Mammary epithelial cell (primary cell): ENCODE measurements at regions of chr3 and their contacts with region 1.

Region 1: DNA sequence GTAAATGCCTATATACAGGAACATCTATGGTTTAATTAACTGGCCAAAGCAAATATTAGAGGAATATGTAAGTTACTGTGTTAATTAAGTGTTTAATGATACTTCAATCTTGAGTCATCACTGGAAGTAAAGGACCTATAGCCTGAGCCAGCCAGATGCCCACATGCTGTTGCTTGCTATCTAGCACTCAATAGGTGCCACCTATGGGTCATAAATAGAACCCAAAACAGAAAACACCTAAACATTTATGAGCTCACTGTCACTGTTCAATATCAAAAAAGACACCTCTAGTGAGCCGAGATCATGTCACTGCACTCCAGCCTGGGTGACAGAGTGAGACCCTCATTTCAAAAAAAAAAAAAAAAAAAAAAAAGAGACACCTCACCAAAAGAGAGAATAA is 48.4 kb upstream of the IP6K2 start:
- DNase-seq: peak; percentile 29
- H3K4me3 ChIP-seq: no peak overlapping the region
- H3K27ac ChIP-seq: no peak overlapping the region
- H3K4me1 ChIP-seq: no peaks in the 10 kb centered on the region
- H3K27me3 ChIP-seq: no peaks in the 10 kb centered on the region
- CTCF ChIP-seq: peak; percentile 28 to 63

Region 2: DNA sequence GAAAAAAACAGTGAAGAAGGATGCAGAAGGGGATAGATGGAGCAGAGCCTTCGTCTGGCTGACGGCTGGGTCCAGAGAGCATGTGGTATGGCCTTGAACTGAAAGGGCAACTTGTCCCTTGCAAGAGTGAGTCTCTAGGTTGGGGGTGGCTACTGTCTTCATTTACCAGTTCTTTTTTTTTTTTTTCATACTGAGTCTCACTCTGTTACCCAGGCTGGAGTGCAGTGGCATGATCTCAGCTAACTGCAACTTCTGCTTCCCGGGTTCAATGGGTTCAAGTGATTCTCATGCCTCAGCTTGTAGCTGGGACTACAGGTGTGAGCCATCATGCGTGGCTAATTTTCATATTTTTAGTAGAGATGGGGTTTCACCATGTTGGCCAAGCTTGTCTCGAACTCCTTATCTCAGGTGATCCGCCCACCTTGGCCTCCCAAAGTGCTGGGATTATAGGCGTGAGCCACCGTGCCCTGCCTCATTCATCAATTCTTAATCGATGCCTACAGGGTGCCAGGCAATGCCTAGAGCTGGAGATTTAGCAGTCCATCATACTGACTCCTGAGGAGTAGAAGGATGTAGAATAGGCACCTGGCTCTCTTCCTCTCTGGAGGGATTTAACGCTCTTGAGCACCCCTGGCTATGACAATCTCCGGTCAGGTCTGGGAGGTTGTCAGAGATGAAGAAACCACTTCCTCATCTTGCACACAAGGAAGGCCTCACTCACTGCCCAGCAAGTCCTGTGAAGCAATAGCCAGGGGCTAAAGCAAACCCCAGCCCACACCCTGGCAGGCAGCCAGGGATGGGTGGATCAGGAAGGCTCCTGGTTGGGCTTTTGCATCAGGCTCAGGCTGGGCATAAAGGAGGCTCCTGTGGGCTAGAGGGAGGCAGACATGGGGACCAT is 542.5 kb before region 1 on chr3 and contains the start of gene CAMP:
- CTCF ChIA-PET with region 1: no interaction called
- dilution Hi-C with region 1: no loop called
- in situ Hi-C with region 1: no loop called
- intact Hi-C with region 1: no loop called
- DNase-seq: peak; percentile 94
- H3K4me3 ChIP-seq: no peak within 1 kb of the TSS
- H3K27ac ChIP-seq: peak within 1 kb of the TSS; percentile 49
- H3K4me1 ChIP-seq: peaks cover 22% of the 10 kb centered on the region
- H3K27me3 ChIP-seq: no peaks in the 10 kb centered on the region
- CTCF ChIP-seq: no peak
- total RNA-seq, gene CAMP: 5.3 to 7.0 TPM

Region 3: GRCh38 chr3:48674505-48674904 is 90.9 kb before region 1 on chr3:
- CTCF ChIA-PET with region 1: no interaction called
- dilution Hi-C with region 1: loop called (anchors 5 kb)
- in situ Hi-C with region 1: no loop called
- intact Hi-C with region 1: no loop called
- DNase-seq: no peak
- H3K4me3 ChIP-seq: no peak overlapping the region
- H3K27ac ChIP-seq: no peak overlapping the region
- H3K4me1 ChIP-seq: no peaks in the 10 kb centered on the region
- H3K27me3 ChIP-seq: no peaks in the 10 kb centered on the region
- CTCF ChIP-seq: no peak

Region 4: GRCh38 chr3:48685602-48686511 is 79.5 kb before region 1 on chr3 and contains the start of gene NCKIPSD:
- CTCF ChIA-PET with region 1: no interaction called
- dilution Hi-C with region 1: no loop called
- in situ Hi-C with region 1: no loop called
- intact Hi-C with region 1: loop called (anchors 1 kb)
- DNase-seq: peak; percentile 79
- H3K4me3 ChIP-seq: peak within 1 kb of the TSS; percentile 51 to 91 (median 79)
- H3K27ac ChIP-seq: peak within 1 kb of the TSS; percentile 69
- H3K4me1 ChIP-seq: peaks cover 32% of the 10 kb centered on the region
- H3K27me3 ChIP-seq: no peaks in the 10 kb centered on the region
- CTCF ChIP-seq: peak; percentile 45 to 87
- total RNA-seq, gene NCKIPSD: 14.8 to 21.1 TPM

Region 5: GRCh38 chr3:48727511-48727910 is 37.9 kb before region 1 on chr3:
- CTCF ChIA-PET with region 1: no interaction called
- dilution Hi-C with region 1: loop called (anchors 5 kb)
- in situ Hi-C with region 1: no loop called
- intact Hi-C with region 1: no loop called
- DNase-seq: no peak
- H3K4me3 ChIP-seq: no peak overlapping the region
- H3K27ac ChIP-seq: no peak overlapping the region
- H3K4me1 ChIP-seq: no peaks in the 10 kb centered on the region
- H3K27me3 ChIP-seq: no peaks in the 10 kb centered on the region
- CTCF ChIP-seq: no peak

Region 6: GRCh38 chr3:48898383-48899234 is 133.2 kb after region 1 on chr3 and contains the start of gene SLC25A20:
- CTCF ChIA-PET with region 1: interaction called, 23 read pairs
- dilution Hi-C with region 1: no loop called
- in situ Hi-C with region 1: no loop called
- intact Hi-C with region 1: no loop called
- DNase-seq: peak; percentile 86
- H3K4me3 ChIP-seq: peak within 1 kb of the TSS; percentile 53 to 75 (median 71)
- H3K27ac ChIP-seq: no peak within 1 kb of the TSS
- H3K4me1 ChIP-seq: peaks cover 14% of the 10 kb centered on the region
- H3K27me3 ChIP-seq: no peaks in the 10 kb centered on the region
- CTCF ChIP-seq: peak in 1 of 2 donors; percentile 13
- total RNA-seq, gene SLC25A20: 11.3 to 17.8 TPM

Region 7: GRCh38 chr3:48918388-48919214 is 153.2 kb after region 1 on chr3 and contains the start of gene ARIH2:
- CTCF ChIA-PET with region 1: no interaction called
- dilution Hi-C with region 1: no loop called
- in situ Hi-C with region 1: no loop called
- intact Hi-C with region 1: loop called (anchors 2 kb)
- DNase-seq: peak; percentile 90
- H3K4me3 ChIP-seq: peak within 1 kb of the TSS; percentile 64 to 98 (median 76)
- H3K27ac ChIP-seq: peak within 1 kb of the TSS; percentile 90
- H3K4me1 ChIP-seq: peaks cover 18% of the 10 kb centered on the region
- H3K27me3 ChIP-seq: no peaks in the 10 kb centered on the region
- CTCF ChIP-seq: peak in 1 of 2 donors; percentile 19
- total RNA-seq, gene ARIH2: 84.7 to 115 TPM